Transverse colon (tissue), 4 donors: ENCODE measurements at regions of chr1 and their contacts with region 1.

Region 1: DNA sequence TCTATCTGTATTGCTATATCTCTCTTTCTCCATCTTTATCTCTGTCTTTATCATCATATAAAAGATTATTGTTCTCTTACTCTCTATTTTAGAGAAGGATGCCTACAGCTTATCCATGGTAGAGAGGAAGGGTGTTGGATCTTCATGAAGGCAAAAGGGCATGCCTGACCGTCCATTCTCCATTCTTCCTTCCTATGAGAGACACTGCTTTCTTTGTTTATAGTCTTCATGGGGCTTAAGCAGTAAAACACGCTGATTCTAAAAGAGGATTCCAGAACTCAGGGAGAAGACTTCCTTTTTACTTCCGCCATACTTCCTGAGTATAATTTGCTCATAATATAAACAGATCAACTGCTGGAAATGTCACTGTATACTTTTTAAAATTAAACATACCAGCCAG is 44.0 kb downstream of the PDE4B start:
- DNase-seq: no peak
- H3K4me3 ChIP-seq: no peak overlapping the region
- H3K27ac ChIP-seq: no peak overlapping the region
- H3K4me1 ChIP-seq: no peaks in the 10 kb centered on the region
- H3K27me3 ChIP-seq: no peaks in the 10 kb centered on the region
- CTCF ChIP-seq: no peak
- EP300 ChIP-seq: no peak
- POLR2A ChIP-seq: no peak

Region 2: DNA sequence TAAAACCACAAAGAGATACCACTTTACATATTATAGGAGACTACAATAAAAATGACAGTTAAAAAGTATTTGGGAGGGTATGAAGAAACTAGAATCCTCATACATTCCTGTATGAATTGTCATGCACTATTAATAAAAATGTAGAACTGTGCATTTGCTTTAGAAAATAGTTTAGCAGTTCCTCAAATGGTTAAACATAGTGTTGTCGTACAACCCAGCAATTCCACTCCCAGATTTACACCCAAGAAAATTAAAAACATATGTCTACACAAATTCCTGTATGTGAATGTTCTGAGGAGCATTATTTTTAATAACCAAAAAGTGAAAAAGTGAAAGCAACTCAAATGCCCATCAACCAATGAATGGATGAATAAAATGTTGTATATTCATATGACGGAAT is 67.0 kb before region 1 on chr1:
- in situ Hi-C with region 1: no loop called
- intact Hi-C with region 1: loop called (anchors 2 kb)
- DNase-seq: no peak
- H3K4me3 ChIP-seq: no peak overlapping the region
- H3K27ac ChIP-seq: no peak overlapping the region
- H3K4me1 ChIP-seq: peaks cover 0 to 2% (median 0%) of the 10 kb centered on the region in 4 donors
- H3K27me3 ChIP-seq: no peaks in the 10 kb centered on the region
- CTCF ChIP-seq: no peak
- EP300 ChIP-seq: no peak
- POLR2A ChIP-seq: no peak